GM12878 (cell line): ENCODE measurements at regions of chr4 and their contacts with region 1.

Region 1: DNA sequence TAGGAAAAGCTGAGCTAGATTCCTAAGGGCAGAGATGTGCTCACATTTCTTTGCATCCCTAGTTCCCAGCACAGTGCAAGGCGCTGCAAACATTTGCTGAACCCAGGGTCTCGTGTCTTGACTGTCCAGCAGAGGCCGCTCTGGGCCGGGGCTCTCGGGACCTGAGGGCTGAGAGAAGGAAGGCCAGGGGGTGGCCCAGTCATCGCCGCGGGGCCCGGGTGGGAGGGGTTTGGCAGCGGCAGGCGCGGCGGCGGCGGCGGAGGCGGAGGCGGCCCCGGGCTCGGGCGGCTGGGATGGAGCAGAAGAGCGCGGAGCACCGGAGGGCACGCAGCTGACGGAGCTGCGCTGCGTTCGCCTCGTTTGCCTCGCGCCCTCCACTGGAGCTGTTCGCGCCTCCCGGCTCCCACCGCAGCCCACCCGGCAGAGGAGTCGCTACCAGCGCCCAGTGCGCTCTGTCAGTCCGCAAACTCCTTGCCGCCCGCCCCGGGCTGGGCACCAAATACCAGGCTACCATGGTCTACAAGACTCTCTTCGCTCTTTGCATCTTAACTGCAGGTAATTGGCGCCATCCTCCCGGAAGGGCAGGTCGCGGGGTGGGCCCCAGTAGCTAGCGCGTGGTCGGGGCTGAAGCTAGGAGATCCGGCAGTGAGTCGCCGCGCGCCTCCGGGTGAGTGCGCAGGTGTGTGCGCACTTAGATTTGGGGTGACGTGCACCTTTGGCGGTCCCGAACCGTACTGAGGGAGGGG is at the start of gene PARM1:
- DNase-seq: no peak
- ATAC-seq: peak; percentile 85
- H3K4me3 ChIP-seq: peak within 1 kb of the TSS; percentile 84
- H3K27ac ChIP-seq: peak within 1 kb of the TSS; percentile 46
- H3K4me1 ChIP-seq: peaks cover 10% of the 10 kb centered on the region
- H3K27me3 ChIP-seq: peaks cover 0 to 3% of the 10 kb centered on the region in 2 experiments; a peak in 2 of 4 replicates
- CTCF ChIP-seq: peak; percentile 66 to 87 (median 76); a peak in 4 of 6 replicates
- EP300 ChIP-seq: no peak
- POLR2A ChIP-seq: peak; percentile 87
- RAD21 ChIP-seq: peak; percentile 97
- polyA plus RNA-seq, gene PARM1: 13.9 to 21.8 TPM

Region 2: GRCh38 chr4:74944328-74944793 is 11.4 kb after region 1 on chr4:
- CTCF ChIA-PET with region 1: interaction called, 12 read pairs
- POLR2A ChIA-PET with region 1: interaction called, 14 read pairs
- RAD21 ChIA-PET with region 1: interaction called, 32 read pairs
- SMC1A ChIA-PET with region 1: interaction called, 36 read pairs
- in situ Hi-C with region 1: no loop called
- intact Hi-C with region 1: no loop called
- DNase-seq: no peak
- ATAC-seq: peak; percentile 80
- H3K4me3 ChIP-seq: 0 out of 2 replicates have a peak overlapping the region, but pooled peaks have one; percentile 20
- H3K27ac ChIP-seq: no peak overlapping the region
- H3K4me1 ChIP-seq: peaks cover 5% of the 10 kb centered on the region
- H3K27me3 ChIP-seq: no peaks in the 10 kb centered on the region; a peak in 1 of 4 replicates
- CTCF ChIP-seq: no peak
- EP300 ChIP-seq: no peak
- POLR2A ChIP-seq: no peak
- RAD21 ChIP-seq: no peak

Region 3: GRCh38 chr4:75004755-75005668 is 72.0 kb after region 1 on chr4:
- CTCF ChIA-PET with region 1: interaction called, 5 read pairs
- POLR2A ChIA-PET with region 1: interaction called, 4 read pairs
- RAD21 ChIA-PET with region 1: interaction called, 15 read pairs
- SMC1A ChIA-PET with region 1: interaction called, 11 read pairs
- in situ Hi-C with region 1: no loop called
- intact Hi-C with region 1: loop called (anchors 2 kb)
- DNase-seq: peak; percentile 71
- ATAC-seq: peak; percentile 96
- H3K4me3 ChIP-seq: no peak overlapping the region
- H3K27ac ChIP-seq: no peak overlapping the region; the same call in 1 of the 2 replicates
- H3K4me1 ChIP-seq: peaks cover 10% of the 10 kb centered on the region; the same call in 1 of the 2 replicates
- H3K27me3 ChIP-seq: no peaks in the 10 kb centered on the region
- CTCF ChIP-seq: 0 out of 6 replicates have a peak, but pooled peaks of 1 of the 3 experiments have one; percentile 3
- EP300 ChIP-seq: peak in 1 of 2 experiments; percentile 31; a peak in 3 of 4 replicates
- POLR2A ChIP-seq: no peak
- RAD21 ChIP-seq: no peak

Region 4: GRCh38 chr4:75015627-75016026 is 82.6 kb after region 1 on chr4:
- CTCF ChIA-PET with region 1: no interaction called
- POLR2A ChIA-PET with region 1: no interaction called
- RAD21 ChIA-PET with region 1: no interaction called
- SMC1A ChIA-PET with region 1: no interaction called
- in situ Hi-C with region 1: no loop called
- intact Hi-C with region 1: no loop called
- DNase-seq: no peak
- ATAC-seq: no peak
- H3K4me3 ChIP-seq: no peak overlapping the region
- H3K27ac ChIP-seq: no peak overlapping the region
- H3K4me1 ChIP-seq: no peaks in the 10 kb centered on the region
- H3K27me3 ChIP-seq: no peaks in the 10 kb centered on the region
- CTCF ChIP-seq: no peak
- EP300 ChIP-seq: no peak
- POLR2A ChIP-seq: no peak
- RAD21 ChIP-seq: no peak

Region 5: DNA sequence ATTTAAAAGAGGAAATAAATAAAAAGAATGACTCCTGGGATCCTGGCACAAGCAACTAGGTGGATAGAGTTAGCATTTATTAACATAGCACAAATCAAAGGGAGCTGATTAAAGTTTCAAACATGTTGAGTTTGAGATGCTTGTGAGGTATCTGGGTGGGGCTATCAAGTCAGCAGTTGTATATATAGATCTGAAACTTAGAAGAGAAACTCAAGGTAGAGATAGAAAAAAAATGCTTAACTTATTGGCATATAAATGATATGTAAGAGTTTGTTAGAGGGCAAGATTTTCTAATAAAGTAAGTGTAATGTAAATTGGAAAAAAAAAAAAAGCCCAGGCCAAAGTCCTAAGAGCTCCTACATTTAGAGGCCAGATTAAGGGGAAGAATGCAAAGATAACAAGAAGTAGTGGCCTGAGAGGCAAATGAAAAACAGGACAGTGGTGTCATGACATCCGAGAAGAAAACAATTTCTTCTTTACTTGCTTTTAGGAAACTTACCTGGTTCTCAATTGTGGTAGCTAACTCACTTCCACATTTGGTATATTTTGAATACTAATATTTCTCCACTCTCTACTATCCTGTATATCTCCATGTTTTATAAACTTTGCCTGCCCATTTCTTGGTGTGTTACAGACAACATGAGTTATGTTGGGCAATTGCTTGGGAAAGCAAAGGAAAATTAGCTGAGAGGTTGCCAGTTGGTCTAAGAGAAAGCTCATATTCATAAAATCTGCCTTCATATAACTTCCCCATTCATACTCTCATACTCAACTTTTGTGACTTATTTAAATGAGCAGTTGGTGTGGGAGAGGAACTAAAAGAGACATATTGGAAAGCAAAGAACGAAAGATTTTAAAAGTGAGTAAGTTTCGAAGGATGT is 169.2 kb after region 1 on chr4:
- CTCF ChIA-PET with region 1: no interaction called
- POLR2A ChIA-PET with region 1: no interaction called
- RAD21 ChIA-PET with region 1: no interaction called
- SMC1A ChIA-PET with region 1: interaction called, 5 read pairs
- in situ Hi-C with region 1: no loop called
- intact Hi-C with region 1: loop called (anchors 5 kb)
- DNase-seq: no peak
- ATAC-seq: peak; percentile 60
- H3K4me3 ChIP-seq: no peak overlapping the region; the same call in 1 of the 2 replicates
- H3K27ac ChIP-seq: peak overlapping the region; percentile 54
- H3K4me1 ChIP-seq: peaks cover 34% of the 10 kb centered on the region
- H3K27me3 ChIP-seq: no peaks in the 10 kb centered on the region
- CTCF ChIP-seq: no peak
- EP300 ChIP-seq: no peak
- POLR2A ChIP-seq: no peak
- RAD21 ChIP-seq: no peak

Region 6: DNA sequence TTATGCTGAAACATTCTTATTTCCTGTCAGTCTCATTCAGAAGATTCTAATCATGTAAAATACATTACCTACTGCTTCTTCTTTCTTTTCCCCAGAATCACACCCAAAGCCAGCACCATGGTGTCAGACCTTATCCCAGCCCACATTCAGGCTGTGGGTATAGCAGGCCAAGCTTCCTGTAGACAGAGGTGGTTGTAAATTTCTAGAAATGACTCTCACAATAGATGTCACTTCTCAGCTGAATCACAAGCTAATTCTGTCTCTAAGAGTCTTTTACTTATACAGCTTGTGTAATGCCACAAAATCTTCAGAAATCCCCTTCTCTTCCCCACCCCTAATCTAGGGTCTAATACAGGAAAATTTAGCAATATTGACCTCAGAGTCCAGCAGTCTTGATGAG is 239.6 kb after region 1 on chr4:
- CTCF ChIA-PET with region 1: interaction called, 3 read pairs
- POLR2A ChIA-PET with region 1: no interaction called
- RAD21 ChIA-PET with region 1: no interaction called
- SMC1A ChIA-PET with region 1: no interaction called
- in situ Hi-C with region 1: no loop called
- intact Hi-C with region 1: loop called (anchors 5 kb)
- DNase-seq: peak; percentile 38
- ATAC-seq: peak; percentile 94
- H3K4me3 ChIP-seq: no peak overlapping the region
- H3K27ac ChIP-seq: no peak overlapping the region
- H3K4me1 ChIP-seq: no peaks in the 10 kb centered on the region
- H3K27me3 ChIP-seq: no peaks in the 10 kb centered on the region
- CTCF ChIP-seq: no peak
- EP300 ChIP-seq: no peak; a peak in 1 of 4 replicates
- POLR2A ChIP-seq: no peak
- RAD21 ChIP-seq: no peak

Region 7: DNA sequence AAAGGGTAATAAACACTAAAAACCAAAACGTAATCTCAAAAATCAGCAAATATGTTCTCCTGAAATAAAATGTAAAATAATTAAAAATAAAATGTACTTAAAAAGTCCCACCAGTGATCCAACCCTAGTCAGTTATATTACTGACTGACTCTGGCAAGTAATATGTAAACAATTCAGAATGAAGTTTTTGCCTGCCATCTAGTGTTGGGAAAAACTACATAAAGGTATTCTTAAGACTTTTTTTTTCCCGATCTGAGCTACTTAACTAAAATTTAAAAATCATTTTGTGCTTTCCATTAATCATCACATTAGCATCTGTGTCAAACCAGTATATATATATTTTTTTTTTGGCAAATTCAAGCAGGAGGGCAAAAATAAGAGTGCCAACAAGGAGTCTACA is 557.2 kb after region 1 on chr4:
- CTCF ChIA-PET with region 1: no interaction called
- POLR2A ChIA-PET with region 1: no interaction called
- RAD21 ChIA-PET with region 1: no interaction called
- SMC1A ChIA-PET with region 1: no interaction called
- in situ Hi-C with region 1: no loop called
- intact Hi-C with region 1: loop called (anchors 5 kb)
- DNase-seq: no peak
- ATAC-seq: no peak
- H3K4me3 ChIP-seq: no peak overlapping the region
- H3K27ac ChIP-seq: no peak overlapping the region
- H3K4me1 ChIP-seq: no peaks in the 10 kb centered on the region
- H3K27me3 ChIP-seq: no peaks in the 10 kb centered on the region
- CTCF ChIP-seq: no peak; a peak in 1 of 6 replicates
- EP300 ChIP-seq: no peak
- POLR2A ChIP-seq: no peak
- RAD21 ChIP-seq: peak; percentile 34; the same call in 1 of the 2 replicates